ENCODE measurements at regions of chr3 and their contacts with region 1.

Region 1: GRCh38 chr3:86867982-86868381 is 123.0 kb downstream of the VGLL3 start:
- DNase-seq: peak; percentile 25
- H3K4me3 ChIP-seq: no peak overlapping the region
- H3K27me3 ChIP-seq: no peaks in the 10 kb centered on the region
- CTCF ChIP-seq: no peak

Region 2: DNA sequence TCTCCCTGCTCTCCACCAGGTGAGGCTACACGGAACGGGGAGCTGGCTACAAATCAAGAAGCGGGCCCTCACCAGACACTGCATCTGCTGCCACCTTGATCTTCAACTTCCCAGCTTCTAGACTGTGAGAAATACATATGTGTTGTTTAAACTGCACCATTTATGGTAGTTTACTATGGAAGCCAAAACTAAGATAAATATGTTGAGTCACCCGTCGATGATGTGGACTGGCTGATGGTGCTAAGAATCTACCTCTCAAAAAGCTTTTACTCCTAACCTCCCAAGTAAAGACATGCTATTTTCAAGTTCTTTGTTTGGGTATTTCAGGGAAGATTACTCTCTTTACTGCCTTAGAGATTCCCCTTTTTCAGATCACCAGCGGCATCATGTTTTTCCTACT is 12.1 kb after region 1 on chr3:
- CTCF ChIA-PET with region 1: interaction called, 4 read pairs
- POLR2A ChIA-PET with region 1: interaction called, 15 read pairs
- DNase-seq: no peak
- H3K4me3 ChIP-seq: no peak overlapping the region
- H3K27me3 ChIP-seq: no peaks in the 10 kb centered on the region
- CTCF ChIP-seq: no peak

Measured in BJ (cell line).